ENCODE measurements at regions of chr19 and their contacts with region 1.

Region 1: GRCh38 chr19:1896508-1896907 is 8.7 kb upstream of the ADAT3 start:
- DNase-seq: no peak
- H3K4me3 ChIP-seq: no peak overlapping the region
- CTCF ChIP-seq: no peak

Region 2: DNA sequence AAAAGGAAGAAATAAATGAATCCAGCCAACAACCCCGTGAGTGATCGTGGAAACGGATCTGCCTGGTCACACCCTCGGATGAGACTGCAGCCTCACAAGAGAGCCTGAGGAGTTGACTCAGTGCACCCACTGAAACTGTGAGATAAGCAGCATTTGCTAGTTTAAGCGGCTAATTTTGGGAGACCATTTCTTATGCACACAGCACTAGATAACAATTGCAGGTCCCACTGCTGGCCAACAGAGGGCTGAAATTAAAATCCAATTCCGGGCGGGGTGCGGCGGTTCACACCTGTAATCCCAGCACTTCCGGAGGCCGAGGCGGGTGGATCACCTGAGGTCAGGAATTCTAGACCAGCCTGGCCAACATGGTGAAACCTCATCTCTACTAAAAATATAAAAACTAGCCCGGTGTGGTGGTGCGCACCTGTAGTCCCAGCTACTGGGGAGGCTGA is 294.9 kb before region 1 on chr19:
- CTCF ChIA-PET with region 1: no interaction called
- POLR2A ChIA-PET with region 1: no interaction called
- DNase-seq: no peak
- H3K4me3 ChIP-seq: no peak overlapping the region
- CTCF ChIP-seq: no peak

Region 3: DNA sequence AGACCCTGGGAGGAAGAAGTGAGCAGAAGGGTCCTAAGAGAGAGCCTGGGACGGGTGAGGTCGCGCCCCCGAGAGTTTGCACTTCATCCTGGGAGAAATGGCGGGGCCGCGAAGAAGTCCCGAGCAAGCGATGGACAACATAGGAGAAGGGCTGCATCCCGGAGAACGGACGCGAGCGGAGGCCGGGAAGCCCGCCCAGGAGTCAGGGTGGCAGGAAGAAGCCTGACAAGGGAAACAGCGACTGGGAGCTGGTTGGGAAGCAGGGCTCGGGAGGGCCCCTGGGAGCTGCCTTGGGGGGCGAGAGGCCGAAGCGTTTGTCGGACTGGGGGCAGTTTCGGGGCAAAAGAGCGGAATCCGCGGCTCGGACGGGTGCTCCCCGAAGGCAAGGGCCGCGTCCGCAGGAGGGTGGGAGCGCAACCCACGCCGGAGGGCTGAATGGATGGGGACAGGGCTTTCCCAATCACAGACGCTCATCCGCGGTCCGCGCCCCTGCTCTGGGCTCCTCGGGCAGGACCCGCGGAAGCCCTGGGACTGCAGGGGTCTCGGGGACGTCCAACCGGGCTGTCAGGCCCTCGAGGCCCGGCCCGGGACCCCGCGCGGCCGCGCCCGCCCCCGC is 11.7 kb before region 1 on chr19:
- CTCF ChIA-PET with region 1: interaction called, 14 read pairs
- POLR2A ChIA-PET with region 1: interaction called, 3 read pairs
- DNase-seq: no peak
- H3K4me3 ChIP-seq: peak overlapping the region; percentile 80
- CTCF ChIP-seq: no peak

Measured in AG04449 (cell line).